Naive thymus-derived CD4-positive, alpha-beta T cell (primary cell): ENCODE measurements at regions of chr10 and their contacts with region 1.

Region 1: DNA sequence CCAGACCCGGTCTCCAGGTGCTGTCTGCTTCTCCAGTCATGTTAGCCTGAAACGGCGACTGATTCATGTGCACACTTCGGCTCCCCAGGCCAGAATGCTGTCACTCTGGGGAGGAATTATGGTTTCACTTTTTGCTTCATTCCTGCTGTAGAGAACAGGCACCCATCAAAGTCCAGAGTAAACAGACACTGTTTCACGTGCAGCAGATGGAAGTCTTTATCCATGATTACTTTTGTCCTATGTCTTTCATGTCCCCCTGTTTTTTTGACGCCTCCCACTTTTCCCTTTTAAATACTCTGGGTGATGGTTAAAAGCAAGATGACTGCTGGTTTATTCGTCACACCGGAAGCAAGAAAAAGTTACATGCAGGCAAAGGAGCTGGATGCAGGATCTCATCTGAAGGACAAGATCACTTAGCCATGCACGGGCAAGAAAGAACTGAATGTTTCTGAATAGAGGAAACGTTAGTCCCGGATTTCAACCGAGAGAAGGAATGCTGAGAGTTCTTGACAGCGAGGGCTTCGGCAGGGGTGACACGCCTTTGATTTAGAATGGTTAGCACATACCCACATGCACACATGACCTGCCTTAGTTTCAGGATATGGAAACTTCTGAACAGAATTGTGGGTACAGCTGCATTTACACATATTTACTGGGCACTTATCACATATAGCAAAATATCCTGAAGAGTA is 250.0 kb upstream of the KLF6 start:
- DNase-seq: peak in 7 of 9 donors; percentile 6 to 41 (median 30)
- ATAC-seq: peak; percentile 78
- H3K4me3 ChIP-seq: peak overlapping the region; percentile 44
- H3K4me3 Mint-ChIP-seq: peak overlapping the region; percentile 73 to 91 (median 82)
- H3K27ac ChIP-seq: peak overlapping the region; percentile 22
- H3K27ac Mint-ChIP-seq: peak overlapping the region; percentile 67 to 91 (median 82)
- H3K4me1 ChIP-seq: peaks cover 4 to 11% of the 10 kb centered on the region in 2 donors
- H3K4me1 Mint-ChIP-seq: peaks cover 8 to 37% (median 17%) of the 10 kb centered on the region in 7 donors
- H3K27me3 ChIP-seq: no peaks in the 10 kb centered on the region
- H3K27me3 Mint-ChIP-seq: no peaks in the 10 kb centered on the region

Region 2: GRCh38 chr10:3835770-3836169 is 199.3 kb before region 1 on chr10:
- CTCF ChIA-PET with region 1: no interaction called
- POLR2A ChIA-PET with region 1: no interaction called
- intact Hi-C with region 1: loop called in 1 of 2 experiments (anchors 5 kb)
- DNase-seq: no peak
- ATAC-seq: peak; percentile 65
- H3K4me3 ChIP-seq: no peak overlapping the region
- H3K4me3 Mint-ChIP-seq: no peak overlapping the region
- H3K27ac ChIP-seq: no peak overlapping the region
- H3K27ac Mint-ChIP-seq: no peak overlapping the region
- H3K4me1 ChIP-seq: peaks cover 0 to 8% of the 10 kb centered on the region in 2 donors
- H3K4me1 Mint-ChIP-seq: peaks cover 0 to 56% (median 0%) of the 10 kb centered on the region in 7 donors
- H3K27me3 ChIP-seq: no peaks in the 10 kb centered on the region
- H3K27me3 Mint-ChIP-seq: no peaks in the 10 kb centered on the region

Region 3: GRCh38 chr10:3980660-3981059 is 54.4 kb before region 1 on chr10:
- CTCF ChIA-PET with region 1: no interaction called
- POLR2A ChIA-PET with region 1: no interaction called
- intact Hi-C with region 1: loop called in 1 of 2 experiments (anchors 2 kb)
- DNase-seq: no peak
- ATAC-seq: peak; percentile 36
- H3K4me3 ChIP-seq: no peak overlapping the region
- H3K4me3 Mint-ChIP-seq: peak overlapping the region in 5 of 10 donors; percentile 37 to 66 (median 50)
- H3K27ac ChIP-seq: no peak overlapping the region
- H3K27ac Mint-ChIP-seq: peak overlapping the region in 5 of 9 donors; percentile 32 to 84 (median 60)
- H3K4me1 ChIP-seq: peaks cover 28 to 67% of the 10 kb centered on the region in 2 donors
- H3K4me1 Mint-ChIP-seq: peaks cover 0 to 39% (median 5%) of the 10 kb centered on the region in 7 donors
- H3K27me3 ChIP-seq: no peaks in the 10 kb centered on the region
- H3K27me3 Mint-ChIP-seq: no peaks in the 10 kb centered on the region

Region 4: DNA sequence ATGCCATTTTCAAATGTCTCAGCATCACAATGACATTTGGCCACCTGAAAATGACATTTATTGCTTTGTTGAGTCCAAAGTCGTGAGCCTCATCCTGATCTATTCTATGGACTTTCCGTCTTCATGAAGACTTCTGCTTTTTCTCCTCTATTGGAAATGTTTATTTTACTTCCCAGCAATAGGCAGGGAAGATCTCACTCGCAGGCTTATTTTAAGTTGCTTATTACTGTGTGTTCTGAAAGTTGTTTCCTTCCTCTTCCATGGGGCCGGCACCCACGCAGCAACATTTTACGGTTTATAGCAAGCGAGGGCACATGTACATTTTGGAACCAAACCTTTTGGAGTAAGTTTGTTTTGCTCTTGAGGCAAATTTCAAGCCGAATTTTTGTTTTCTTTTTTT is 29.0 kb before region 1 on chr10:
- CTCF ChIA-PET with region 1: no interaction called
- POLR2A ChIA-PET with region 1: no interaction called
- intact Hi-C with region 1: no loop called
- DNase-seq: no peak
- ATAC-seq: peak; percentile 16
- H3K4me3 ChIP-seq: no peak overlapping the region
- H3K4me3 Mint-ChIP-seq: peak overlapping the region in 1 of 10 donors; percentile 27
- H3K27ac ChIP-seq: no peak overlapping the region
- H3K27ac Mint-ChIP-seq: peak overlapping the region in 2 of 9 donors; percentile 34 to 75
- H3K4me1 ChIP-seq: no peaks in the 10 kb centered on the region
- H3K4me1 Mint-ChIP-seq: peaks cover 0 to 10% (median 4%) of the 10 kb centered on the region in 7 donors
- H3K27me3 ChIP-seq: no peaks in the 10 kb centered on the region
- H3K27me3 Mint-ChIP-seq: no peaks in the 10 kb centered on the region

Region 5: DNA sequence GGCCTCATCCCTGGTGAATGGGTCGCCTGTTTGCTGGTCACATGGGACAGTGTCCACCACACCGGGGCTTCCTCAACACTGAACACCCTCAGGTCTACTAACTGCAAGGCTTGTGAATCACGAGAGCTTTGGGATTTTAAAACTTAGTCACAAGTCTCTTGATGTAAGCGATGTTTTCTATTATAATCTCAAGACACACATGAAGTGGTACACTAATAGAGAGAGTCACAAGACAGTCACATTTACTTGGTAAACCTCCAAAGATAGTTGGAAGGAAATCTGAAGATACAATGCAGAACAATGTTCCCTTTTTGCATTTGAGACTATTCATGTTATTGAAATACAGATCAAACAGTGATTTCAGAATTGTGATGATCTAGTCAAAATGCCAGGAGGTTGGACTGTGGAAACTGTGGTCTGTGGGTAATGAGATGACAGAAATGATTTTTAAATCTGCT is 17.0 kb before region 1 on chr10:
- CTCF ChIA-PET with region 1: no interaction called
- POLR2A ChIA-PET with region 1: no interaction called
- intact Hi-C with region 1: no loop called
- DNase-seq: no peak
- ATAC-seq: no peak
- H3K4me3 ChIP-seq: no peak overlapping the region
- H3K4me3 Mint-ChIP-seq: no peak overlapping the region
- H3K27ac ChIP-seq: no peak overlapping the region
- H3K27ac Mint-ChIP-seq: no peak overlapping the region
- H3K4me1 ChIP-seq: no peaks in the 10 kb centered on the region
- H3K4me1 Mint-ChIP-seq: peaks cover 0 to 11% (median 0%) of the 10 kb centered on the region in 7 donors
- H3K27me3 ChIP-seq: no peaks in the 10 kb centered on the region
- H3K27me3 Mint-ChIP-seq: no peaks in the 10 kb centered on the region

Region 6: GRCh38 chr10:4073912-4074311 is 38.9 kb after region 1 on chr10:
- CTCF ChIA-PET with region 1: no interaction called
- POLR2A ChIA-PET with region 1: no interaction called
- intact Hi-C with region 1: loop called in 1 of 2 experiments (anchors 5 kb)
- DNase-seq: no peak
- ATAC-seq: no peak
- H3K4me3 ChIP-seq: no peak overlapping the region
- H3K4me3 Mint-ChIP-seq: no peak overlapping the region
- H3K27ac ChIP-seq: no peak overlapping the region
- H3K27ac Mint-ChIP-seq: peak overlapping the region in 2 of 9 donors; percentile 40 to 88
- H3K4me1 ChIP-seq: peaks cover 11 to 32% of the 10 kb centered on the region in 2 donors
- H3K4me1 Mint-ChIP-seq: peaks cover 12 to 45% (median 23%) of the 10 kb centered on the region in 7 donors
- H3K27me3 ChIP-seq: no peaks in the 10 kb centered on the region
- H3K27me3 Mint-ChIP-seq: no peaks in the 10 kb centered on the region

Region 7: DNA sequence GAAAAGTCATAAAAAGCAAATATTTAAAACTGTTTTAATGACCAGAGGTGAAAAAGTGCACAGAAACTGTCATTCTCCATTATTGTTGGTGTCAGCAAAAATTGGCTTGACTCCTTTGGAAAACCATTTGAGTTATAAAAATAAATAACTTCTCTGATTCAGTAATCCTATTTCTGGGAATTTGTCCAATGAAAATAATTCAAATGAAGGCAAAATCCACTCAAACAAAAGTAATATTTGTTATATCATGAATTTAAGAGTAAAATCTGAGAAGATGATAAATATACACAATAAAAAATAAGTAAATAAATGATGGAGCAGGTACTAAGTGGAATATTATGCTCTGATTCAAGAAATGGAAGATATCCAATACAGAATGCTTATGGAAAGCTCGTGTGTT is 76.6 kb after region 1 on chr10:
- CTCF ChIA-PET with region 1: no interaction called
- POLR2A ChIA-PET with region 1: no interaction called
- intact Hi-C with region 1: no loop called
- DNase-seq: no peak
- ATAC-seq: no peak
- H3K4me3 ChIP-seq: no peak overlapping the region
- H3K4me3 Mint-ChIP-seq: no peak overlapping the region
- H3K27ac ChIP-seq: no peak overlapping the region
- H3K27ac Mint-ChIP-seq: no peak overlapping the region
- H3K4me1 ChIP-seq: no peaks in the 10 kb centered on the region
- H3K4me1 Mint-ChIP-seq: peaks cover 0 to 17% (median 2%) of the 10 kb centered on the region in 7 donors
- H3K27me3 ChIP-seq: no peaks in the 10 kb centered on the region
- H3K27me3 Mint-ChIP-seq: peaks cover 0 to 4% (median 0%) of the 10 kb centered on the region in 5 donors